K562 (cell line): ENCODE measurements at regions of chr18 and their contacts with region 1.

Region 1: GRCh38 chr18:23131693-23132319 is 3.5 kb upstream of the CABLES1 start:
- DNase-seq: peak; percentile 79 to 85 (median 82)
- ATAC-seq: peak; percentile 88
- H3K4me3 ChIP-seq: no peak overlapping the region
- H3K27ac ChIP-seq: no peak overlapping the region
- H3K4me1 ChIP-seq: peaks cover 0 to 20% of the 10 kb centered on the region in 2 experiments; a peak in 2 of 5 replicates
- H3K27me3 ChIP-seq: peaks cover 28 to 32% of the 10 kb centered on the region in 2 experiments
- CTCF ChIP-seq: peak; percentile 75 to 81 (median 81)
- EP300 ChIP-seq: no peak
- POLR2A ChIP-seq: no peak
- RAD21 ChIP-seq: peak; percentile 84 to 90

Region 2: GRCh38 chr18:22703883-22704585 is 427.8 kb before region 1 on chr18:
- CTCF ChIA-PET with region 1: no interaction called
- POLR2A ChIA-PET with region 1: no interaction called
- in situ Hi-C with region 1: no loop called
- intact Hi-C with region 1: no loop called
- DNase-seq: peak; percentile 70 to 79 (median 74)
- ATAC-seq: peak; percentile 87
- H3K4me3 ChIP-seq: no peak overlapping the region
- H3K27ac ChIP-seq: no peak overlapping the region
- H3K4me1 ChIP-seq: peaks cover 0 to 4% of the 10 kb centered on the region in 2 experiments; a peak in 1 of 5 replicates
- H3K27me3 ChIP-seq: no peaks in the 10 kb centered on the region; a peak in 1 of 5 replicates
- CTCF ChIP-seq: peak; percentile 64 to 88 (median 72); a peak in 5 of 6 replicates
- EP300 ChIP-seq: no peak
- POLR2A ChIP-seq: no peak
- RAD21 ChIP-seq: peak; percentile 65 to 90

Region 3: GRCh38 chr18:22946846-22947245 is 185.0 kb before region 1 on chr18:
- CTCF ChIA-PET with region 1: no interaction called
- POLR2A ChIA-PET with region 1: no interaction called
- in situ Hi-C with region 1: no loop called
- intact Hi-C with region 1: no loop called
- DNase-seq: no peak
- ATAC-seq: no peak
- H3K4me3 ChIP-seq: no peak overlapping the region
- H3K27ac ChIP-seq: no peak overlapping the region
- H3K4me1 ChIP-seq: no peaks in the 10 kb centered on the region
- H3K27me3 ChIP-seq: no peaks in the 10 kb centered on the region
- CTCF ChIP-seq: no peak
- EP300 ChIP-seq: no peak
- POLR2A ChIP-seq: no peak
- RAD21 ChIP-seq: no peak

Region 4: GRCh38 chr18:23207191-23207955 is 75.6 kb after region 1 on chr18:
- CTCF ChIA-PET with region 1: no interaction called
- POLR2A ChIA-PET with region 1: no interaction called
- in situ Hi-C with region 1: no loop called
- intact Hi-C with region 1: loop called (anchors 5 kb)
- DNase-seq: peak; percentile 49 to 83 (median 80)
- ATAC-seq: peak; percentile 90
- H3K4me3 ChIP-seq: no peak overlapping the region
- H3K27ac ChIP-seq: no peak overlapping the region
- H3K4me1 ChIP-seq: no peaks in the 10 kb centered on the region
- H3K27me3 ChIP-seq: peaks cover 25 to 70% of the 10 kb centered on the region in 2 experiments
- CTCF ChIP-seq: peak; percentile 67 to 87 (median 71)
- EP300 ChIP-seq: no peak
- POLR2A ChIP-seq: no peak
- RAD21 ChIP-seq: peak in 1 of 2 experiments; percentile 40; a peak in 1 of 4 replicates

Region 5: DNA sequence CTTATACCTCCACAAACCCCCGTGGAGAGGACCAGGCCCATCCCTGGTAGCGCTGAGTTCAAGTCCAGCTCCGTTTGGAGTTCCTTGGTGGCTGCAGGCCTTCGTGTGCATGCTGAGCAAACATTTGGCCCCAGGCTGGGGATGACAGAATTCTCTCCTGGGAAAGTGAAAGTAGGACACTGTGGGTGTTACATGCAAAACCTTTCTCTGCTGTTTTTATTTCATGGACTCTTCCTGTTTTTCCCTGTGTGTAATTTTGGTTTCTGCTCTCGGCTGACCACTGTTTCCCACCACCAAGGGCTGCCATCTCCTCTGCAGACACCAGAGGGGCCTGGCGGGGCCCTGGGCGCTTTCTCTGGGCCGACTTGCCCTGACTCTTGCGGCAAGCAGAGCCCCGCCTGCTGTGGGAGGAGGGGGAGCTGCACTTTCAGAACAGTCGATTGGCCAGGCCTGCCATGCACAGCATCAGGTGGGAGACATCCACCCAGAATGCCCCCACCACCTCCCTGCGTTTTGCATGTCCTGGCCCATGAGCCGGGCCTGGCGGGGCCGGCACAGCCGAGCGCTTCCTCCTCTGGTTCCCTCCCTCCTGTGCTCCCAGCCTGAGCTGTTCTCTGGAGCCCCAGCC is 105.8 kb after region 1 on chr18:
- CTCF ChIA-PET with region 1: no interaction called
- POLR2A ChIA-PET with region 1: no interaction called
- in situ Hi-C with region 1: no loop called
- intact Hi-C with region 1: no loop called
- DNase-seq: peak in 2 of 4 experiments; percentile 33
- ATAC-seq: peak; percentile 80
- H3K4me3 ChIP-seq: no peak overlapping the region
- H3K27ac ChIP-seq: no peak overlapping the region
- H3K4me1 ChIP-seq: peaks cover 0 to 5% of the 10 kb centered on the region in 2 experiments; a peak in 2 of 5 replicates
- H3K27me3 ChIP-seq: peaks cover 65 to 80% of the 10 kb centered on the region in 2 experiments
- CTCF ChIP-seq: peak; percentile 17 to 40 (median 19); a peak in 3 of 6 replicates
- EP300 ChIP-seq: no peak
- POLR2A ChIP-seq: no peak
- RAD21 ChIP-seq: no peak

Region 6: DNA sequence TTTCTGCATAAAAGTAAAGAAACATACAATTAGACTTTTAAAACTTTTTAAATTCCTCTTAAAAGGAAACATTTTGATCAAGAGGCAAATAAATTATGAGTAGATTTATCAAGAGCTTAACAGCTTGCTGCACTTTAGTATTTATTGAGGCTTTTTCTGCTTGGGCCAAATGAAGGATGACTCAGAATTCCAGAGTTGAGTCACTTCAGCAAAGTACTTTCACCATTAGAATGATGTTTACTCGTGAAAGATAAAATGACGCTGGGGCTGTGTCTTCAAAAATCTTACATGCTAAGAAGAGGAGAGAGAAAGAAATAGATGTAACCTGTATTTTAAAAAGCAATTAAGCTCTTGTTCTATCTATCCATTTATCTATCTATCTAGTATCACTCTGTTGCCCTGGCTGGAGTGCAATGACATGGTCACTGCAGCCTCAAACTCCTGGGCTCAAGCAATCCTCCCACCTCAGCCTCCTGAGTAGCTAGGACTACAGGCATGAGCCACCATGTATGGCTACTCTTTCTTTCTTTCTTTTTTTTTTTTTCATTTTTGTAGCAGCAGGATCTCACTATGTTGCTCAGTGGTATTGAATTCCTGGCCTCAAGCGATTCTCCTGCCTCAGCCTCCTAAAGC is 246.0 kb after region 1 on chr18:
- CTCF ChIA-PET with region 1: interaction called, 17 read pairs
- POLR2A ChIA-PET with region 1: no interaction called
- in situ Hi-C with region 1: no loop called
- intact Hi-C with region 1: loop called (anchors 10 kb)
- DNase-seq: peak in 1 of 4 experiments; percentile 25
- ATAC-seq: no peak
- H3K4me3 ChIP-seq: no peak overlapping the region
- H3K27ac ChIP-seq: no peak overlapping the region
- H3K4me1 ChIP-seq: peaks cover 6 to 17% of the 10 kb centered on the region in 2 experiments; a peak in 3 of 5 replicates
- H3K27me3 ChIP-seq: no peaks in the 10 kb centered on the region; a peak in 1 of 5 replicates
- CTCF ChIP-seq: no peak
- EP300 ChIP-seq: no peak
- POLR2A ChIP-seq: no peak
- RAD21 ChIP-seq: no peak

Region 7: DNA sequence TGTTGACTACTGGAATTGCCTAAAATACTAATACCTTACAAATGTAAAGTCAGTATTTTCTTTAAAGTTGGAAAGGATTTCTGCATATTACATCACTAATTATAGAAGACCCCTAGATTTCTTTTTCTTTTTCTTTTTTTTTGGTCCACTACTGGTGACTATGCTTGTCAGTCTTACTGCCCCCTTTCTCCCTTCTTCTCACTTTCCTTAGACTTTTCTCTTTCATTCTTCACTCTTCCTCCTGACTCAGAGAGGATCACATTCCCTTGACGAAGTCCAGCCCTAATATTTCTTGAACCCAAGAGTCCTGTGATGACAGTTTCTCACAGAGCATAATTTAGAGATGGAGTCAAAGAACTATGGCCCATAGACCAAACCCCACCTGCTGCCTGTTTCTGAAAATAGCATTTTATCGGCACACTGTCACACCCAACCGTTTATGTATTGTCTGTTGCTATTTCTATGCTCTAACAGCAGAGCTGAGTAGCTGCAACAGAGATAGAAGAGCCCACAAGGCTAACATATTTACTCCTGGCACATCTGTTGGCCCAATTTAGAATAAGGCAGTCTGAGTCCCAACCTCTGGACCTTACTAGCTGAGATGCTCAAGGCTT is 280.7 kb after region 1 on chr18:
- CTCF ChIA-PET with region 1: interaction called, 18 read pairs
- POLR2A ChIA-PET with region 1: interaction called, 3 read pairs
- in situ Hi-C with region 1: loop called (anchors 5 kb)
- intact Hi-C with region 1: loop called (anchors 1 kb)
- DNase-seq: no peak
- ATAC-seq: no peak
- H3K4me3 ChIP-seq: no peak overlapping the region
- H3K27ac ChIP-seq: no peak overlapping the region
- H3K4me1 ChIP-seq: no peaks in the 10 kb centered on the region
- H3K27me3 ChIP-seq: no peaks in the 10 kb centered on the region
- CTCF ChIP-seq: no peak
- EP300 ChIP-seq: no peak
- POLR2A ChIP-seq: no peak
- RAD21 ChIP-seq: no peak

Region 8: DNA sequence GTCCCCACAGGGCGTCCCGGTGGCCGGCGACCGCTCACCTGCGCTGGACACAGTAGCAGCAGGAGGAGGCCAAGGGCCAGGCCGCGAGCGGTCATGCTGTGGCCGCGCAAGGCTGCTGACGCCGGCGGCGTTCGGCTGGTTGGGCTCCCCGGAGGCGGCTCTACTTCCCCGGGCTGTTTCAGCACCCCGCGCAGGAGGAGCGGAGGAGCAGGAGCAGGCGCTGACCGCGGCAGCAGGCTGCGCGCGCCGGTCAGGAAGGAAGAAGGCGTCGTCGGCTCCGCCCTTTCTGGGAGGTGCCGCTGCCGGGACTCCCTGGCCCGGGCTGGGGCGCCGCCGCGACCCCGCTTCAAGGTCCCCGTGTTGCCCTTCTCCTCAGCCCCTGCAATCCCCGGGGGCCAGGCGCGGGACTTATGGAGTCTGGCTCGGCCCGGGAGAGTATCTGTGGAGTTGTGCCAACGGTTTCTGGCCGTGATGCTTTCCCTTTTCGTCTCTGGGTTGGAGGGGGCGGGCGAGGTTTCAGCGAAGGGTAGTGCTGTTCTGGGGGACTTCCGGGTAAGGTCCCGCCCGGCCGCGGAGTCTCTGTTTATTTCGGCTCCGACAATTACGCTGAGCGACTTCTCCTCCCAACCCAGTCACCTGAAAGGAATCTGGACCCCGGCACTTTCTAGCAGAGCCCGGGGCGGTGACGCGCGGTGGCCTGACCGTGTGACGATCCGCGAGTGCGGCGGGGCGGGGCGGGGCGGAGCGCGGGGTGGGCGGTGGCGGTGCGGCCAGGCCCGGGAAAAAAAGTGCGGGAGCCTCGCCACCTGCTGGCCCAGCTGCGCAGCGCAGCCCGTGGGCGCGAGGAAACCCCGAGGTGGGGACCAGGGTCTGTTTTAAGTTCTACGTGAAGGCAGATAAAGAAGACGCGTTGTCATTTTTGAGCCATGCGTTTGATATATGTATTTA is 454.7 kb after region 1 on chr18 and contains the start of gene NPC1:
- CTCF ChIA-PET with region 1: interaction called, 6 read pairs
- POLR2A ChIA-PET with region 1: no interaction called
- in situ Hi-C with region 1: no loop called
- intact Hi-C with region 1: loop called (anchors 10 kb)
- DNase-seq: peak; percentile 93 to 97 (median 94)
- ATAC-seq: peak; percentile 97
- H3K4me3 ChIP-seq: peak within 1 kb of the TSS; percentile 93
- H3K27ac ChIP-seq: peak within 1 kb of the TSS; percentile 97
- H3K4me1 ChIP-seq: peaks cover 8 to 11% of the 10 kb centered on the region in 2 experiments; a peak in 4 of 5 replicates
- H3K27me3 ChIP-seq: peaks cover 10 to 19% of the 10 kb centered on the region in 2 experiments; a peak in 3 of 5 replicates
- CTCF ChIP-seq: peak; percentile 86 to 90 (median 88)
- EP300 ChIP-seq: peak; percentile 27; the same call in 1 of the 2 replicates
- POLR2A ChIP-seq: peak; percentile 97
- RAD21 ChIP-seq: peak; percentile 82
- polyA plus RNA-seq, gene NPC1: 17.1 to 19.1 TPM

Region 9: DNA sequence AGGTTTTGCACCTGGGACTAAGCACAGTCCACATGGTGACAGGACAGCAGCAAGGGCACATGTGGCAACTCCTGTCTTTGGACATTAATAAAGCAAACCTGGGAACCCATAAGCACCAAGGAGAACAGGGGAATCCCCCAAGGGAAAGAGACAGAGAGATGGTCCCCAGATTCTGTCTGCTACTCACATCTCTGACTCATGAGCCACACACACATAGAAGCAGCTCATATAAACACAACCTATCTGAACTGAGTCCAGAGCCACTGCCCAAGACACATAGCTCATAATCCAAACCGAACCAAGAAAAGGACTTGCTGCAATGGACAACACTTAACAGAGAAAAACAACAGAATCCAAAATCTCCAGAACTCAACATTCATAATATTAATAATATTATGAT is 1183.4 kb after region 1 on chr18:
- CTCF ChIA-PET with region 1: no interaction called
- POLR2A ChIA-PET with region 1: no interaction called
- in situ Hi-C with region 1: no loop called
- intact Hi-C with region 1: no loop called
- DNase-seq: no peak
- ATAC-seq: no peak
- H3K4me3 ChIP-seq: no peak overlapping the region
- H3K27ac ChIP-seq: no peak overlapping the region
- H3K4me1 ChIP-seq: no peaks in the 10 kb centered on the region
- H3K27me3 ChIP-seq: no peaks in the 10 kb centered on the region
- CTCF ChIP-seq: no peak
- EP300 ChIP-seq: no peak
- POLR2A ChIP-seq: no peak
- RAD21 ChIP-seq: no peak